PC-3 (cell line): ENCODE measurements at regions of chr6 and their contacts with region 1.

Region 1: GRCh38 chr6:151025076-151025475 is 159.6 kb downstream of the MTHFD1L start:
- DNase-seq: no peak
- ATAC-seq: no peak
- H3K4me3 ChIP-seq: no peak overlapping the region
- H3K27ac ChIP-seq: no peak overlapping the region
- H3K4me1 ChIP-seq: peaks cover 42% of the 10 kb centered on the region
- H3K27me3 ChIP-seq: no peaks in the 10 kb centered on the region
- CTCF ChIP-seq: no peak

Region 2: GRCh38 chr6:150949526-150949925 is 75.5 kb before region 1 on chr6:
- CTCF ChIA-PET with region 1: no interaction called
- POLR2A ChIA-PET with region 1: no interaction called
- intact Hi-C with region 1: no loop called
- DNase-seq: no peak
- ATAC-seq: no peak
- H3K4me3 ChIP-seq: no peak overlapping the region
- H3K27ac ChIP-seq: no peak overlapping the region
- H3K4me1 ChIP-seq: no peaks in the 10 kb centered on the region
- H3K27me3 ChIP-seq: no peaks in the 10 kb centered on the region
- CTCF ChIP-seq: no peak

Region 3: DNA sequence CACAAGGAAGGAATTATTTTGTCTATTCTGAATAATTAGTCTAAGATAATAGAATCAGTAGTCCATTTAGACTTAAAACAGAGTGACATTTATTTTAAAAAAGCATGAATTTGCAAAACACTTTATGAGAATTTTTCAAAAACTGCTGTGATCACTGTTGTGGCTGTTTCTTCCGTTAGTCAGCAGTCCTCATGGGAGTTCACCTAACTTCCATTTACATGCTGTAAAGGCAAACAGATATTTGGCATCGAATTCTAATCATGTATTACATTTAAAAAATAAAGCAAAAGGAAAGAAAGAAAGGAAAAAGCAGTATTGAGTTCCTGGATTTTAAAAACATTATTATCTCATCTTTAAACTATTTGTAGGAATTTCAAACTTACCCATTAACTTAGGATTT is 47.8 kb before region 1 on chr6:
- CTCF ChIA-PET with region 1: no interaction called
- POLR2A ChIA-PET with region 1: no interaction called
- intact Hi-C with region 1: no loop called
- DNase-seq: no peak
- ATAC-seq: no peak
- H3K4me3 ChIP-seq: no peak overlapping the region
- H3K27ac ChIP-seq: no peak overlapping the region
- H3K4me1 ChIP-seq: no peaks in the 10 kb centered on the region
- H3K27me3 ChIP-seq: no peaks in the 10 kb centered on the region
- CTCF ChIP-seq: no peak

Region 4: DNA sequence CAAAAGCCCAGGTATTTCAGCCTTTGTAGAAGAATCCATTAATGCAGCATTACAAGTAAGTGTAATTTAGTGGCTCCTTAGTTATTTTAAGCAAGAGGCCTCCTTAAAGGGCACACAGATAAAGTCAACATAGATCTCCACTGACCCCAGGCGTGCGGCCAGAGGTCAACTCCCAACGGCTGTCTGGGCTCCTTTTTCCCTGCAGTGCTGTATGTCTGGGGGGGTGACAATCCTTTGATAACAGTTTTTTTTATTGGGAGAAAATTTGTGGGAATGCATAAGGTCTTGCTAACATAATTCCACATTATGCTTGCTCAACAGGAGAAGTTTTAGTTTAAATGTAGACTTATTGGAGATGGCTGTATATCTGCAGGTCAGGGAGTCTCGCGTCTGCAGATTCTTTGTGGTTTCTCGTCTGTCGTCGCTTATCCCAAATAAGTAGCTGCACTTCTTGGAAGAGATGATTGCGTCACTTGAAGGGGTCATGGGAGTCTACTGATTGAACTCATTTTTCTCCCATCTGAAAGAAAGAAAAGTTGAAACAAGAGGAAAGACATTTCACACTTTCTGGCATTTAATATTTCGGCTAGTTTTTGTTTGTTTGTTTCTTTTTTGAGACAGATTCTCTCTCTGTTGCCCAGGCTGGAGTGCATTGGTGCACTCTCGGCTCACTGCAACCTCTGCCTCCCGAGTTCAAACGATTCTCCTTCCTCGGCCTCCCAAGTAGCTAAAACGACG is 63.0 kb after region 1 on chr6:
- CTCF ChIA-PET with region 1: no interaction called
- POLR2A ChIA-PET with region 1: no interaction called
- intact Hi-C with region 1: loop called (anchors 5 kb)
- DNase-seq: no peak
- ATAC-seq: no peak
- H3K4me3 ChIP-seq: no peak overlapping the region
- H3K27ac ChIP-seq: 0 out of 2 replicates have a peak overlapping the region, but pooled peaks have one; percentile 3
- H3K4me1 ChIP-seq: peaks cover 42% of the 10 kb centered on the region
- H3K27me3 ChIP-seq: no peaks in the 10 kb centered on the region
- CTCF ChIP-seq: no peak